Activated T-helper 2 cell treated with anti-CD3 and anti-CD28 coated beads, Interferon-gamma antibody, Interleukin-2, Interleukin-4, amounts not matched to agents 10 μg/mL and 5 μg/mL and 100 μg/mL, durations not matched to agents 14 hours and 24 hours and 36 hours (primary cell): ENCODE measurements at regions of chr11 and their contacts with region 1.

Region 1: DNA sequence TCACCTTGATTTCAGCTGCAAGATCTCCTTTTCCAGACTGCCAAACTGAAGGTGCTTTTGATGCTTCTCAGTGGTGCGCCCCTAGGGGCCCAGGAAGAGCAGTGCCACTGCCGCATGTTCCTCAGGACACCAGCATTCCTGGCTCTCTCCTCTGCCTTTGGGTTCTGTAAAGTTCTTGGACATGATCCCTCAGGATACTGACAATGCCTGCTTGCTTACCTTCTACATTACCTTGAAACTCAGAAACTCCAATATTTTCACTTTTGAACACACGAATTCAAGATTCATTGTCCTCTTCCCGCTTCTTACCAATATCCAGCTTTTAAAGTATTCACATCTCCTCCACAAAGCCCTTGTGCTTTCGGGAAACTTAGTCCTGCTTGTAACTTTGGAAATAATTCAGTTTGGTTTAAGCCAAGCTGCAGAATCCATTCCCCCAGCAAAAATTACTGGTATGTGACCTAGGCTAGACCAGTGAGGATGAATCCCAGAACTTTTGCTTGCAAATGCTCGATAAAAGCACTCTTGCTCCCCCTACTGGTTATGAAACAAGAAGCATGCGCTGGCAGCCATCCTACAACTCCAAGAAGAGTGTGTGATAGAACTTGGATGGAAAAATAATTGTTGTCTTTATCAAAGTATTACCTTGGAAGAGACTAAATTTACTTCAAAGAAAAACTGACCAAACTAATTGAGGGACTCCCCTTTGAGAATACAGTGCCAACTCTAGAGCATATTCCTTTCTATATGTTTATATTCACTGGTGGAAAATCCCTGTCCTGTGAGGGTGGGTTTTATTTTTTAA is 16.5 kb upstream of the OR5B21 start:
- DNase-seq: peak; percentile 29
- H3K4me3 Mint-ChIP-seq: peak overlapping the region; percentile 75
- H3K27ac Mint-ChIP-seq: peak overlapping the region; percentile 88
- H3K4me1 Mint-ChIP-seq: peaks cover 48% of the 10 kb centered on the region
- H3K27me3 Mint-ChIP-seq: no peaks in the 10 kb centered on the region

Region 2: DNA sequence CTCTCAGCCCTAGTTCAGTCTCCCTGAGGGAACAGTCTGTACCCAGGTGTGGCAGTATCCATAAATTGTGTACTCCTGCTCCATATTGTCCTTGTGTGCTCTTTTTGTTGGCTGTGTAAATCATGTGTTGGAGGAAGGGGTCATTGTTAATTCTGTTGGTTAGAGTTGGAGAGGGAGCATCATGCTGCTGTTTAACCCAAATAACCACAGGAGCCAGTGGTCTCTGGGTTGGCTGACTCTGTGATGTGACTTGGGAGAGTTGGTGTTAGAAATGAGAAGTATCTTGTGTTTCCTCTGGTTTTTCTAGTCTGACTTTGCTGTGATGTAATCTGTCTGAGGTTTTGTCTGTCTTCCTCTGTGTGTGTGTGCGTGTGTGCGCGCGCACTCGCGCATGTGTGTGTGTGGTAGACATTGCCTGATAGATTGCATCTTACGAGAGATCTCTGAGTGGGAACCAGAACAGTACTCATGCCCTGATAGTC is 732.3 kb before region 1 on chr11:
- intact Hi-C with region 1: loop called (anchors 1 kb)
- DNase-seq: peak; percentile 85
- H3K4me3 Mint-ChIP-seq: peak overlapping the region; percentile 45
- H3K27ac Mint-ChIP-seq: peak overlapping the region; percentile 68
- H3K4me1 Mint-ChIP-seq: peaks cover 40% of the 10 kb centered on the region
- H3K27me3 Mint-ChIP-seq: no peaks in the 10 kb centered on the region